ENCODE measurements at regions of chr7 and their contacts with region 1.

Region 1: DNA sequence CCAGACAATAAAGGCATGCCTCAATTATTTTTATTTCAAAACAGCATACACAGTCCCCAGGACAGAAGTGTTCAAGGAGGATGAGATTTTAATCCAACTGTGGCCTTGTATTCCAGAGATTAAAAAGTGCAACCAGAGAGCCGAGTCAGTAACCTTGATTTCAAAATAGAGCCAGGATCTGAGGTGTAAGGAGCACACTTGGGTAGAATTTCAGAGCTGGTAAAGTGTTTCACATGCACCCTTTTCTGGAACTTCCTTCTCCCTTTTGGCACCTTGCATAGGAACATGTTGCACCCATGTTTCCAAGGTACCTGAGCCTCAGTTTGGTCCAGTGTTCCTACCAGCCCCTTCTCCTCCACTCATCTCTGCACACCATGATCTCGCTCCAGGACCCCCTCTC is 225.1 kb downstream of the TRIL start:
- DNase-seq: no peak
- H3K4me3 Mint-ChIP-seq: no peak overlapping the region
- H3K27ac Mint-ChIP-seq: no peak overlapping the region
- H3K4me1 Mint-ChIP-seq: peaks cover 9% of the 10 kb centered on the region
- H3K27me3 Mint-ChIP-seq: no peaks in the 10 kb centered on the region
- CTCF ChIP-seq: no peak

Region 2: GRCh38 chr7:28520074-28521015 is 212.7 kb before region 1 on chr7:
- CTCF ChIA-PET with region 1: no interaction called
- intact Hi-C with region 1: no loop called
- DNase-seq: no peak
- H3K4me3 Mint-ChIP-seq: no peak overlapping the region
- H3K27ac Mint-ChIP-seq: no peak overlapping the region
- H3K4me1 Mint-ChIP-seq: no peaks in the 10 kb centered on the region
- H3K27me3 Mint-ChIP-seq: no peaks in the 10 kb centered on the region
- CTCF ChIP-seq: no peak

Region 3: DNA sequence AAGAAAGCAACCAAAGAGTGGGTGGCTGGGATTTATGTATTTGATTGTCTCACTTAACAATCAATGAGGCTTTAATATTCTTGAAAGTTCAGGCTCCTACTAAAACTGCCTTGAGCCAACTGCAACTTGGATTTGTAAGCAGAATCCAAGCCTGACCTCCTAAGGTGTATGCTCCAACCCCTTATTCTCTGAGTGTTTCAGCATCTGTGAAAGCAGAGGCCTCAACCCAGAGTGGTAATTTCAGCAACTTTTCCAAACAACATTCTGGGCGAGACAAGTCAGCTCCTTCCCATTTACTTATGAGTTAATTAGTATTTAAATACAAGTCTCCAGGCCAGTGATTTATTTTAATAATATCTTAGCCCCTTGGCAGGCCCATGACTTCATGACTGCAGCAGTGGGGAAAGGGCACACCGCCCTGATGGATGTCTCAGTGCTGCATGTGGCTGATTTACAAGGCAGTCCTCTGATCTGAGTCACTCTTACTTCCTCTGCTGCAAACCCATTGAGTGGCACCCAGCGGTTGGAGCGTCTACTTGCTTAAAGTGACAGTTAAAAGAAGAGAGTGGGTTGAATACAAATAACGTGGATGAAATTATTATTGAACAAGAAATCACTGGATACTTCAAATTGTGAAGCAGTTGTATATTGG is 16.0 kb after region 1 on chr7:
- CTCF ChIA-PET with region 1: interaction called, 4 read pairs
- intact Hi-C with region 1: loop called (anchors 1 kb)
- DNase-seq: peak; percentile 62
- H3K4me3 Mint-ChIP-seq: no peak overlapping the region
- H3K27ac Mint-ChIP-seq: peak overlapping the region; percentile 36
- H3K4me1 Mint-ChIP-seq: peaks cover 19% of the 10 kb centered on the region
- H3K27me3 Mint-ChIP-seq: no peaks in the 10 kb centered on the region
- CTCF ChIP-seq: no peak

Measured in Calu3 (cell line).